ENCODE measurements at regions of chr10 and their contacts with region 1.

Region 1: GRCh38 chr10:124827474-124827873 is 25.9 kb downstream of the ABRAXAS2 start:
- DNase-seq: peak; percentile 26
- CTCF ChIP-seq: peak; percentile 36

Region 2: DNA sequence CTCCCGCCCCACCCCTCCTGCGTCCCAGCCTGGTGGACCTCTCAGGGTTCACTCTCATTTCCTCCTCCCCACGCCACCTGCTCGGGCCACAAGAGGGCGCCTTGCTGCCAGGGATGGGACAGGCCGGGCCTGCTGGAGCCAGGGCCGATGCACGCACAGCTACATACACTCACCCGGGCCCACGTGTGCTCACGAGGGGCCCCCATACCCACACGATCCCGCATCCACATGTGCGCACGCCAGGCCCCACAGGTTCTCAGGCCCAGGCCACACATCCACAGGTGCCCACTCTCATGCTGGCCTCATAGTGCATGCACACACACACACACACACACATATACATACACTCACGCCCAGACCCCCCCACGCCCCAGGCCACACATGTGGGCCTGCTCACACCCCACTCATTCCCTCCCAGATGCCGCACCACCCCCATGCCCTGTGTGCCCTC is 297.2 kb before region 1 on chr10:
- CTCF ChIA-PET with region 1: interaction called, 13 read pairs
- POLR2A ChIA-PET with region 1: no interaction called
- DNase-seq: peak; percentile 95
- CTCF ChIP-seq: peak; percentile 99

Region 3: DNA sequence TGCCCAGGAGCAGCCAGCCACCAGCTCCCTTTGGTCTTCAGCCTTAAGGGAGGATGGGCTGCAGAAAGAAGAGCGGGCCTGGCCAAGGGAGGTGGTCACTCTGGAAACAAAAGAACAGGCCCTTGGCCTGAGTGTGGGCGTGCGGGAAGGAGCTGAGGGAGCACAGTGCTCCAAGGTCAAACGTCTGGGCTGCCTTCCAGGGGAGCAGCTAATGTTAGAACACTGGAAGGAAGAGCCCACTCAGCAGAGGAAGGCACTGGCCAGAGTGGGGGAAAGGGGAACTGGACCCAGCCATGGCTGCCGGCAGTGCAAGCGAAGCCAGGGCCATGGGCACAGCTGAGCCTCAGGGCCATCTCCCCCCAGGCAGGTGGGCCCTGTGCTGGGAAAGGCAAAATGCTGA is 126.0 kb before region 1 on chr10:
- CTCF ChIA-PET with region 1: no interaction called
- POLR2A ChIA-PET with region 1: no interaction called
- DNase-seq: no peak
- CTCF ChIP-seq: no peak

Region 4: DNA sequence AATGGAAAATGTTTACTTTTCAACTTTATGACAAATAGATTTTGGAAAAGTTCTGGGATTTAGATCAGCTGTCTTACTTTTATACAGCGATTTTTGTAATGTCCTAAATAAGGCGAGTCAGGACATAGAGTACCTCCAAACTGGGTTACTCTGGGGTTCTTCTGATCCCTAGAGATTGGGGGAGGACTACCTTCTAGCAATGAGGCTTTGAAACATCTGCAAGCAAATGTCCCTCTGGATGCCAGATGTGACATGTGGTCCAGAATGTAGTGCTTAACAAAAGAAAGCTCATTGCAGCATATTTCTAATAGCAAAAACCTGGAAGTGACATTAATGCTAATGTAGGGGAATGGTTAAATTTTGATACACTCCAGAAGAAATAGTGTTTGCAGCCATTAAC is 10.2 kb after region 1 on chr10:
- CTCF ChIA-PET with region 1: interaction called, 12 read pairs
- POLR2A ChIA-PET with region 1: no interaction called
- DNase-seq: no peak
- CTCF ChIP-seq: no peak

Measured in GM10248 (cell line).